GM12878 (cell line): ENCODE measurements at regions of chr4 and their contacts with region 1.

Region 1: GRCh38 chr4:41079871-41080560 is 134.3 kb downstream of the APBB2 start:
- DNase-seq: no peak
- ATAC-seq: no peak
- H3K4me3 ChIP-seq: no peak overlapping the region
- H3K27ac ChIP-seq: no peak overlapping the region
- H3K4me1 ChIP-seq: no peaks in the 10 kb centered on the region
- H3K27me3 ChIP-seq: no peaks in the 10 kb centered on the region
- CTCF ChIP-seq: no peak
- EP300 ChIP-seq: no peak
- POLR2A ChIP-seq: no peak
- RAD21 ChIP-seq: no peak

Region 2: GRCh38 chr4:40962551-40963180 is 117.3 kb before region 1 on chr4:
- CTCF ChIA-PET with region 1: no interaction called
- POLR2A ChIA-PET with region 1: no interaction called
- RAD21 ChIA-PET with region 1: no interaction called
- SMC1A ChIA-PET with region 1: no interaction called
- in situ Hi-C with region 1: no loop called
- intact Hi-C with region 1: no loop called
- DNase-seq: no peak
- ATAC-seq: no peak
- H3K4me3 ChIP-seq: no peak overlapping the region
- H3K27ac ChIP-seq: no peak overlapping the region
- H3K4me1 ChIP-seq: no peaks in the 10 kb centered on the region
- H3K27me3 ChIP-seq: no peaks in the 10 kb centered on the region
- CTCF ChIP-seq: no peak
- EP300 ChIP-seq: no peak
- POLR2A ChIP-seq: no peak
- RAD21 ChIP-seq: no peak

Region 3: DNA sequence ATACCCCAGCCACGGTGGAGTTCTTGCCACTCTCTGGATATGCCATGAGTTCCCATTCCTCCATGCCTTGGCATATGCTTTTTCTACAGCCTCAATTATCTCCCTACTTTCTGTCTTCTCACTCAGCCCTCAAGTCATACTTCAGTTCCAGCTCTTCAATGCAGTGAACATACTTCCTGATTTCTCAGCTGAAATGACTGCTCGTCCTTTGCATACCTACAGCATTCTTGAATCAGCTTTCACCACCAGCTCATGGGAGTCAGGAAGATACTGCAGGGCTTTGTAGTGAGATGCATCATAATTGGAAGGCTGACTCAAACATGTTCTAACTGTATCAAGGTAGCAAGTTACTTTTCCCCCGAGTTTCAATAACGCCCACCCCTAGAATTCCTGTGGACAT is 16.0 kb after region 1 on chr4:
- CTCF ChIA-PET with region 1: interaction called, 4 read pairs
- POLR2A ChIA-PET with region 1: interaction called, 3 read pairs
- RAD21 ChIA-PET with region 1: interaction called, 6 read pairs
- SMC1A ChIA-PET with region 1: interaction called, 20 read pairs
- in situ Hi-C with region 1: no loop called
- intact Hi-C with region 1: no loop called
- DNase-seq: peak; percentile 54
- ATAC-seq: peak; percentile 60
- H3K4me3 ChIP-seq: no peak overlapping the region
- H3K27ac ChIP-seq: peak overlapping the region; percentile 23; the same call in 1 of the 2 replicates
- H3K4me1 ChIP-seq: peaks cover 6% of the 10 kb centered on the region; the same call in 1 of the 2 replicates
- H3K27me3 ChIP-seq: no peaks in the 10 kb centered on the region
- CTCF ChIP-seq: no peak
- EP300 ChIP-seq: no peak
- POLR2A ChIP-seq: no peak
- RAD21 ChIP-seq: no peak